ENCODE measurements at regions of chr7 and their contacts with region 1.

Region 1: GRCh38 chr7:23013715-23014649 is at the start of gene HYCC1:
- DNase-seq: peak; percentile 99
- ATAC-seq: peak; percentile 96 to 100 (median 97)
- H3K4me3 ChIP-seq: peak within 1 kb of the TSS; percentile 94
- H3K4me3 Mint-ChIP-seq: peak within 1 kb of the TSS; percentile 97
- H3K27ac ChIP-seq: peak within 1 kb of the TSS; percentile 58
- H3K27ac Mint-ChIP-seq: peak within 1 kb of the TSS in 1 of 2 donors; percentile 85
- H3K4me1 ChIP-seq: peaks cover 14% of the 10 kb centered on the region
- H3K4me1 Mint-ChIP-seq: peaks cover 11 to 19% of the 10 kb centered on the region in 2 donors
- H3K27me3 ChIP-seq: no peaks in the 10 kb centered on the region
- H3K27me3 Mint-ChIP-seq: peaks cover 0 to 3% of the 10 kb centered on the region in 2 donors
- CTCF ChIP-seq: peak; percentile 67
- total RNA-seq, gene HYCC1: 30.1 to 44.8 (median 34.1) TPM

Region 2: GRCh38 chr7:21898265-21898930 is 1115.6 kb before region 1 on chr7:
- intact Hi-C with region 1: no loop called
- DNase-seq: peak in 1 of 2 donors; percentile 63
- ATAC-seq: peak; percentile 82 to 90 (median 89)
- H3K4me3 ChIP-seq: peak overlapping the region; percentile 23
- H3K4me3 Mint-ChIP-seq: peak overlapping the region; percentile 93
- H3K27ac ChIP-seq: peak overlapping the region; percentile 85
- H3K27ac Mint-ChIP-seq: peak overlapping the region; percentile 94 to 97
- H3K4me1 ChIP-seq: peaks cover 15% of the 10 kb centered on the region
- H3K4me1 Mint-ChIP-seq: peaks cover 20 to 21% of the 10 kb centered on the region in 2 donors
- H3K27me3 ChIP-seq: no peaks in the 10 kb centered on the region
- H3K27me3 Mint-ChIP-seq: no peaks in the 10 kb centered on the region
- CTCF ChIP-seq: no peak

Region 3: DNA sequence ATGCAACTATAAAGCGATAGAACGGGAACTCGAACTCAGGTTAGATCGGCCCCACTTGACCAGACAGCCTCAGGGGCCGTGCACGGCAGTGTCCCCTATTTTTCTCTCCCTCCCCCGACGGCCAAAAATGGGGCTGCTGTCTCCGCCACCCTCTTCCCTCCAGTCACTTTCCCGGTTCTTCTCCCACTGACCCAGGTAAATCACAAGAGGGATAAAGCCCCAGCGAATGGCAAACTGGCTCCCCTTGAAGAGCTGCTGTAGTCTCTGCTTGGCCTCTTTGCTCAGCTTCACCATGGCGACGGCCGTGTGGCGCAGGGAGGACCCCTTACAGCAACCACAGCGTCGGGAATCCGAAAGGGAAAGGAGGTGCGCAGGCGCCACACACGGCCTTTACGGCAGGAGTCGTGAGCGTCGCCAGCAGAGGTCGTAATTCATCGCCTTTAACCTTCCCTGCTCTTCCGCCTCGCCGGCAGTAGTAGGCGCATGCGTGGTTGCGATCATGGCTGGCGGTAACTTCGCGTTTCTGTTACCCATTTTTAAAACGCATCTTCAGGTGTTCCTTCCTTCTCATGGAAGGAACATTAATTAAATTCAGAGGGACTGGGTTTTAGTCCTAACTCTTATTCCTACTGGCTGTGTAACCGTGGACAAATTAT is 191.4 kb before region 1 on chr7 and contains the start of gene TOMM7:
- intact Hi-C with region 1: loop called (anchors 1 kb)
- DNase-seq: peak; percentile 80 to 98
- ATAC-seq: peak; percentile 97 to 99 (median 99)
- H3K4me3 ChIP-seq: peak within 1 kb of the TSS; percentile 89
- H3K4me3 Mint-ChIP-seq: peak within 1 kb of the TSS; percentile 99
- H3K27ac ChIP-seq: peak within 1 kb of the TSS; percentile 81
- H3K27ac Mint-ChIP-seq: peak within 1 kb of the TSS; percentile 97 to 98
- H3K4me1 ChIP-seq: peaks cover 13% of the 10 kb centered on the region
- H3K4me1 Mint-ChIP-seq: peaks cover 34 to 40% of the 10 kb centered on the region in 2 donors
- H3K27me3 ChIP-seq: peaks cover 2% of the 10 kb centered on the region
- H3K27me3 Mint-ChIP-seq: peaks cover 7 to 22% of the 10 kb centered on the region in 2 donors
- CTCF ChIP-seq: no peak
- total RNA-seq, gene TOMM7: 194 to 286 (median 269) TPM

Region 4: DNA sequence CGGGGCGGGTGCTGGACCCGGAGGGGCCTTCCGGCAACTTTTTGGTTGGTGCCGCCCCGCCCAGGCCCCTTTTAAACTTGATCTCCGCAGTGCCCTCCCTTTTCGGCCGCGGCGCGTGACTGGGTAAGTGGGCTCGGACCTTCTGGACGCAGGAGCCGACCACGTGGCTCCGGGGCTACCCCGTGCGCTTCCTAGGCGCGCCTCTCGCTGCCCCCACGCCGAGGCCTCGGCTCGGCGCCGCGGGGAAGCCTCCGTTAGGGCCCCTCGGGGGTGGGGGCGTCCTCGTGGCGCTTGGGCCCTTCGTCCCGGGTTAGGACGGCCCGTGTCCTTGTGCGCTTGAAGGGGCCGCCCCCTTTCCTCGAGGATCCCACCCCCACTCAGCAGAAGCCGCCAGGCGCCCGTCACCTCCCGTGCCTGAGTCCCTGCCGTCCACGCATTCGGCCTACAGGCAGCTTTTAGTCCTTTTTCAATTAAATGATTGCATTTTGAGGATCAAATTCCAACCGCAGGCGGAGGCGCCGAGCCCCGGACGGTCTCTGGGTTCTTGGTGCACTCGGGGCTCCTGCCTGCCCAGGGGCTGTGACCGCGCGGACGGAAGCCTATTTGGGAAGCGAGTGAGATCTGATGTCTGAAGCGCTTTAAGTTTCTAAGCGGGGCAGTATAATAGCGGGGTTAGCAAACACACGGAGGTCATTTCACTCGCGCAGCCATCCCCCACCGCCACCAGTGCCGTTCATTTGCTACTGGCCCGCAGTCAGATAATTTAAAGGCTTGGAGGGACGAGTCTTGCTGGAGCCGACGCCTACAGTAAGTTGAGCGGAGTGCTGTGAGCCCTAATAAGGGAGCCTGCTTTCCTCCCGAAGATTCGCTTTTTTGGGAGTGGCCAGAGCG is 159.6 kb before region 1 on chr7:
- intact Hi-C with region 1: loop called (anchors 1 kb)
- DNase-seq: peak; percentile 75 to 89
- ATAC-seq: peak; percentile 87 to 93 (median 88)
- H3K4me3 ChIP-seq: peak overlapping the region; percentile 62
- H3K4me3 Mint-ChIP-seq: peak overlapping the region; percentile 96
- H3K27ac ChIP-seq: peak overlapping the region; percentile 76
- H3K27ac Mint-ChIP-seq: peak overlapping the region; percentile 82 to 93
- H3K4me1 ChIP-seq: peaks cover 20% of the 10 kb centered on the region
- H3K4me1 Mint-ChIP-seq: peaks cover 16 to 20% of the 10 kb centered on the region in 2 donors
- H3K27me3 ChIP-seq: no peaks in the 10 kb centered on the region
- H3K27me3 Mint-ChIP-seq: no peaks in the 10 kb centered on the region
- CTCF ChIP-seq: peak; percentile 91

Region 5: DNA sequence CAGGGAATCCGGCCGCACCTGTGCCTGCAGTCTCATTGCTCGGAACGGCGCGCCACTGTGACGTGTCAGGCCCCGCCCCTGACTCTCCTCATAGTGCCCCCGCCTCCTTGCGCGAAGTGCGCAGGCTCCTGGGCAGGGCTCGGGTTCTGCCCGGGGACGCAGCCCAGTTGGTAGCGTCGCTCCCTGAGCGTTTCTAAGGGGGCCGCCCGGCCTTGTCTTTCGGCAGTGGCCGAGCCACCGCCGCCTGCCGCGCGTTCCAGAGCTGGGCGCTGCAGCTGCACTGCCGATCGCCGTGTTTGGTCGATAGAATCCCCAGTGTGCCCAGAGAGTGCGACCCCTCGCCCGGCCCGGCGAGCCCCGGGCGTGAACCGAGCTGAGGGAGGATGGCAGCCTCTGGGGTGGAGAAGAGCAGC is 91.7 kb after region 1 on chr7 and contains the start of gene KLHL7:
- intact Hi-C with region 1: loop called (anchors 1 kb)
- DNase-seq: peak; percentile 97
- ATAC-seq: peak; percentile 95 to 99 (median 96)
- H3K4me3 ChIP-seq: peak within 1 kb of the TSS; percentile 72
- H3K4me3 Mint-ChIP-seq: peak within 1 kb of the TSS; percentile 97
- H3K27ac ChIP-seq: peak within 1 kb of the TSS; percentile 87
- H3K27ac Mint-ChIP-seq: peak within 1 kb of the TSS; percentile 97 to 98
- H3K4me1 ChIP-seq: peaks cover 10% of the 10 kb centered on the region
- H3K4me1 Mint-ChIP-seq: peaks cover 39 to 42% of the 10 kb centered on the region in 2 donors
- H3K27me3 ChIP-seq: no peaks in the 10 kb centered on the region
- H3K27me3 Mint-ChIP-seq: no peaks in the 10 kb centered on the region
- CTCF ChIP-seq: no peak
- total RNA-seq, gene KLHL7: 13.9 to 19.1 (median 14.5) TPM

Region 6: GRCh38 chr7:23181684-23182553 is 167.9 kb after region 1 on chr7 and contains the start of gene NUP42:
- intact Hi-C with region 1: loop called (anchors 1 kb)
- DNase-seq: peak; percentile 94 to 98
- ATAC-seq: peak; percentile 90 to 98 (median 93)
- H3K4me3 ChIP-seq: peak within 1 kb of the TSS; percentile 87
- H3K4me3 Mint-ChIP-seq: peak within 1 kb of the TSS; percentile 96
- H3K27ac ChIP-seq: peak within 1 kb of the TSS; percentile 93
- H3K27ac Mint-ChIP-seq: peak within 1 kb of the TSS; percentile 99
- H3K4me1 ChIP-seq: peaks cover 18% of the 10 kb centered on the region
- H3K4me1 Mint-ChIP-seq: peaks cover 23 to 29% of the 10 kb centered on the region in 2 donors
- H3K27me3 ChIP-seq: no peaks in the 10 kb centered on the region
- H3K27me3 Mint-ChIP-seq: peaks cover 0 to 3% of the 10 kb centered on the region in 2 donors
- CTCF ChIP-seq: no peak
- total RNA-seq, gene NUP42: 37.5 to 41.6 (median 40.2) TPM

Region 7: DNA sequence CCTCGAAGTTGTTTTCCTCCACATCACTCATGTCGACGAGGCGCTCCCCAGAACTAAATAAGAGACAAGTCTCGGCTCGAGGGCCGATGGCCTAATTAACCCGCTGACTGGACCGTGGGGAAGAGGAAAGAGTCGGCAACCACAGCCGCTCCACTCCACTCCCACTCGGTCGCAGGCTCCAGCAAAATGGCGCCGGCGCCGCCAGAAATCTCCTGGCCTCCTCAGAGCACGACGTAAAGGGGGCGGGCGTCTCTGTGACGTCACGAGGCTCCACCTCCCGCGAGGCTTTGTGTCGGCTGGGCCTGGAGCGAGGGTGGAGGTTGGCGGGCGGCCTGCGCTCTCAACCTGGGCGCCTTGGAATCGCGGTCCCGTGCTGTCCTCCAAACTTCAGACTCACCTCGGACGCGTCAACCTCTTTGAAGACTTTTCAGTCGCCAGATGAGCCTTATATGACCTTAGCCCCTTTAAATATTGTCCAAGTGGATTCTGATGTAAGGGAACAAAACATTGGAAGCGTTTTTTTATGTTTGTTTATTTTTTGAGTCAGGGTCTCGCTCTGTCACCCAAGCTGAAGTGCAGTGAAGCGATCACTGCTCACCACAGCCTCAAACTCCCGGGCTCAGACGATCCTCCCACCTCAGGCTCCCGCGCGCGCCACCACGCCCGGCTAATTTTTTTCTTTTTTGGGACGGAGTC is 518.0 kb after region 1 on chr7 and contains the start of gene TRA2A:
- intact Hi-C with region 1: loop called (anchors 10 kb)
- DNase-seq: peak; percentile 98
- ATAC-seq: peak; percentile 82 to 97 (median 90)
- H3K4me3 ChIP-seq: peak within 1 kb of the TSS; percentile 95
- H3K4me3 Mint-ChIP-seq: peak within 1 kb of the TSS; percentile 100
- H3K27ac ChIP-seq: peak within 1 kb of the TSS; percentile 99
- H3K27ac Mint-ChIP-seq: peak within 1 kb of the TSS; percentile 99 to 100
- H3K4me1 ChIP-seq: peaks cover 22% of the 10 kb centered on the region
- H3K4me1 Mint-ChIP-seq: peaks cover 46 to 52% of the 10 kb centered on the region in 2 donors
- H3K27me3 ChIP-seq: no peaks in the 10 kb centered on the region
- H3K27me3 Mint-ChIP-seq: no peaks in the 10 kb centered on the region
- CTCF ChIP-seq: no peak
- total RNA-seq, gene TRA2A: 269 to 385 (median 324) TPM

Measured in natural killer cell (primary cell).